Activated CD8-positive, alpha-beta T cell treated with anti-CD3 and anti-CD28 coated beads for 36 hours (primary cell): ENCODE measurements at regions of chr12 and their contacts with region 1.

Region 1: DNA sequence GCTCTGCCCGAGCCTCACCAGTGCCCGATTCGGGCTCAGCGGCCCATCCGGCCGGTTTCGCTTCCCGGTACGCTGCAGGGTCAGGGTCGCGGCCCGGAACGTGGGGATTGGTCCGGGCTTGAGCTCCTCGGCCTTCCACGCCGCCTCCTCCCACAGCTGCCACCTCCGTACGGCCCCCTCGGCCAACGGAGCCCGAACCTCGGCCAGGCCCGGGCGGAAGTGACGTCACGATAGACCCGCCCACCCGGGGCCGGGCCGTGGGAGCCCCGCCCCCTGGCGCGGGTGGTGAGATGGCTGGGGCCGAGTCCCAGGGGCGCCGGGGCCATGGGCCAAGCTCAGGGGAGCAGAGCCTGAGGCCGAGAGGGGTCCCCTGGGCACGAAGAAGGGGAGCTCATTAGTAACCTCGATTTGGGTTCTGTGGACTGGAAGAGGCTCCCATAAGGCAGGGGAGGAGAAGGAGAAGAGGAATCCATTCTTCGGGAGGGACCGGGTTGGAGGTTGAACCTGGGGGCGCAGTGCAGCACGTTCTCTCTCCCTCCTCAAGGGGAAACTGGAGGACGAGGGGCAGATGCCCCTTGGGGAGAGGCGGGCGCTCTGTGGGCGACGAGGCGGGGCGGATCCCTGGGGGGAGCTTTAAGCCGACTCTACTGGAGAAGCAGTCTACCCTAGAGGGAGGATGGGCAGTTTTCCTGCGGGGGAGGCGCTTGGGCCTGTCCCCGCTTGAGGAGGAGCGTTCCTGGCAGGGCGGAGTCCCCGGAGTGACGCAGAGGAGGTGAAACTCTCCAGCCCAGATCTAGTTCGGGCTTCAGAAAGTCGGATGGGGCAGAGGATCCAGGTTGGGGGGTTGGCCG is at the start of gene MLF2:
- DNase-seq: peak; percentile 99
- ATAC-seq: peak; percentile 95
- H3K4me3 Mint-ChIP-seq: peak within 1 kb of the TSS; percentile 91
- H3K27ac Mint-ChIP-seq: peak within 1 kb of the TSS; percentile 99
- H3K4me1 Mint-ChIP-seq: peaks cover 20% of the 10 kb centered on the region
- H3K27me3 Mint-ChIP-seq: no peaks in the 10 kb centered on the region
- CTCF ChIP-seq: no peak
- total RNA-seq, gene MLF2: 149 to 151 TPM

Region 2: DNA sequence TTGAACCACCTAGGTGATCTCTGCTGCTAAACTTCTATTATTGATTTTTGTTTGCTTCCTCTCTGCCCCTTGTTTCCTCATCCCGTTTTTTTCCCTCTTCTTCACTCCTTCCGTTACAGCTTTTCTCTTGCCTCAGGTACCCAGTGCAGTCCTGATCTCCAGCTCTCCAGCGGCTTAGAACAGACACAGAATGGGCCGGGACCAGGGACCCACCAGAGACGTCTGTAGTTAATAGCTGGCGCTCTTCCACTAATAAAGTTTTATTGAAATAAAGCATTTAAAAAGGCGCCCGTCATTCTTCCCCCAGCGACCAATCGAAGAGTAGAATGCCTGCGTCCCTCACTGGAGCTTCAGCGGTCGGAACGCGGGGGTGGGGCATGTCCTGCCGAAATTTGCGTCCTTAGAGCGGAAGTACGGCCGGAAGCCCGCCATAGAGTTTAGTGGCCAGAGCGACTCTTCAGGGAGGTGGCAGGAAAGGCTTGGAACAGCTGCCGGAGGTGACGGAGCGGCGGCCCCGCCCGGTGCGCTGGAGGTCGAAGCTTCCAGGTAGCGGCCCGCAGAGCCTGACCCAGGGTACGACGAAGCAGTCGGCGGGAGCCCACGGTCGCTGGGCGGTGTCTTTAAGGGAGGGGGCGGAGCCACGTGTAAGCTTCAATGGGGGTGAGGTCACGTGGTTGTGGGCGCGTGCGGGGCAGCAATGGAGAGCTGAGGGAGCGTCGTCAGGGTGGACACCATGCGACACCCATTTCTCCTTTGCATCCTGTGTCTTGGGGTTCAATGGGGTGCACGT is 29.3 kb before region 1 on chr12 and contains the start of gene COPS7A:
- CTCF ChIA-PET with region 1: interaction called, 27 read pairs
- POLR2A ChIA-PET with region 1: interaction called, 17 read pairs
- intact Hi-C with region 1: no loop called
- DNase-seq: peak; percentile 100
- ATAC-seq: peak; percentile 94
- H3K4me3 Mint-ChIP-seq: peak within 1 kb of the TSS; percentile 85
- H3K27ac Mint-ChIP-seq: peak within 1 kb of the TSS; percentile 97
- H3K4me1 Mint-ChIP-seq: peaks cover 24% of the 10 kb centered on the region
- H3K27me3 Mint-ChIP-seq: no peaks in the 10 kb centered on the region
- CTCF ChIP-seq: no peak
- total RNA-seq, gene COPS7A: 35.9 to 38.8 TPM

Region 3: DNA sequence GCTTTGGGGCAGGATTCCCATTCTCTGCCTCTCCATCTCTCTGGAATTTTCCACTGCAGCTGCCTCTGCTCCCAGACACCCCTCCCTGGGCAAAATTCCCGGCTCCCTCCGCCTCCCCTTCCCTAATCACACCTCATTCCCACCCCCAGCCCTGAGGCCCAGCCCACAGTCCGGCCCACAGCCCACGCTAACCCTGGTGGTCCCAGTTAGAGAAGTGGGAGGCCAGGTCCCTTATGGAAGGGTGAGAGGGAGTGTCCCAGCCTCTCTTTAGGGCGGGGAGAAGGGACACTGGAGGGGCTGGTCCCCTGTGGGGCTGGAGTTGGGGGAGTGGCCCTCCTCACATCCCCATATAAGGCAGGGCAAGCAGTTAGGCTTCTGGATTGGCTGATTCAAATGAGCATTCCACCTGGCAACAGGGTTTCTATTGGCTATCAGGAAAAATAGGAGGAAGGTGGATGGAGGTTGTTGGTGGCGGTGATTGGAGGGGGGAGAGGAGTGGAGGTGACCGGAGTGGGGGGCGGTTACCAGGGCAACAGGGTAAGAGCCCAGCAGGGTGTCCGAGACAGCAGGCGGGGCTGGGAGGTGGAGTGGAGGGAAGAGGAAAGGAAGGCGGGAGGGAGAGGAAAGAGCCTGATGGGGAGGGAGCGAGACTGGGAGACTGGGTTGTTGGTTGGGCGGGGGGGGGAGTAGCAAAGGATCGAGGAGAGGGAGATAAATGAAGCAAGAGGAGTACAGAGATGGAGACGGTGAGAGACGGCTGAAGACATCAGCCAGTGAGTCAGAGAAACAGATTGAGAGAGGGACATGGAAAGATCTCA is 11.1 kb after region 1 on chr12:
- CTCF ChIA-PET with region 1: interaction called, 77 read pairs
- POLR2A ChIA-PET with region 1: interaction called, 31 read pairs
- intact Hi-C with region 1: no loop called
- DNase-seq: peak; percentile 71
- ATAC-seq: peak; percentile 84
- H3K4me3 Mint-ChIP-seq: peak overlapping the region; percentile 42
- H3K27ac Mint-ChIP-seq: no peak overlapping the region
- H3K4me1 Mint-ChIP-seq: peaks cover 29% of the 10 kb centered on the region
- H3K27me3 Mint-ChIP-seq: peaks cover 32% of the 10 kb centered on the region
- CTCF ChIP-seq: no peak

Region 4: GRCh38 chr12:6778574-6779550 is 25.7 kb after region 1 on chr12:
- CTCF ChIA-PET with region 1: interaction called, 117 read pairs
- POLR2A ChIA-PET with region 1: interaction called, 31 read pairs
- intact Hi-C with region 1: no loop called
- DNase-seq: peak; percentile 96
- ATAC-seq: peak; percentile 54
- H3K4me3 Mint-ChIP-seq: peak overlapping the region; percentile 89
- H3K27ac Mint-ChIP-seq: peak overlapping the region; percentile 89
- H3K4me1 Mint-ChIP-seq: peaks cover 83% of the 10 kb centered on the region
- H3K27me3 Mint-ChIP-seq: no peaks in the 10 kb centered on the region
- CTCF ChIP-seq: peak; percentile 89

Region 5: DNA sequence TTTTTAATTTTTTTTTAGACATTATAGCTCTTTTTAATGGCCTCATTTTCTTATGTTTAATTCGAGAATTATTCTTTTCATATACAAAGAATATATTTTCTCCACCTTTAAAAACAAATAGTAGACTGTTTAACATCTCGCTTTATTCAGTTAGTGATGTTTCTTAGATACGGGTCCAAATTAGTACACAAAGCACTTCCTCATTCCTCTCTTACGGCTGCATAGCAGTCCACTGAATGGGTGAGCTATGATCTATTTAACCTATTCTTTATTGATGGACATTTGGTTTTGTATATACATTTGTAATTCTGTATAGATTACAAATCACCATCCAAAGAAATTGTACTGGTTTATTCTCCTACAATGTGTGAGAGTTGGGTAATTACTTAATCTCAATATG is 60.2 kb after region 1 on chr12:
- CTCF ChIA-PET with region 1: interaction called, 24 read pairs
- POLR2A ChIA-PET with region 1: interaction called, 3 read pairs
- intact Hi-C with region 1: no loop called
- DNase-seq: no peak
- ATAC-seq: no peak
- H3K4me3 Mint-ChIP-seq: no peak overlapping the region
- H3K27ac Mint-ChIP-seq: no peak overlapping the region
- H3K4me1 Mint-ChIP-seq: peaks cover 7% of the 10 kb centered on the region
- H3K27me3 Mint-ChIP-seq: peaks cover 2% of the 10 kb centered on the region
- CTCF ChIP-seq: no peak

Region 6: DNA sequence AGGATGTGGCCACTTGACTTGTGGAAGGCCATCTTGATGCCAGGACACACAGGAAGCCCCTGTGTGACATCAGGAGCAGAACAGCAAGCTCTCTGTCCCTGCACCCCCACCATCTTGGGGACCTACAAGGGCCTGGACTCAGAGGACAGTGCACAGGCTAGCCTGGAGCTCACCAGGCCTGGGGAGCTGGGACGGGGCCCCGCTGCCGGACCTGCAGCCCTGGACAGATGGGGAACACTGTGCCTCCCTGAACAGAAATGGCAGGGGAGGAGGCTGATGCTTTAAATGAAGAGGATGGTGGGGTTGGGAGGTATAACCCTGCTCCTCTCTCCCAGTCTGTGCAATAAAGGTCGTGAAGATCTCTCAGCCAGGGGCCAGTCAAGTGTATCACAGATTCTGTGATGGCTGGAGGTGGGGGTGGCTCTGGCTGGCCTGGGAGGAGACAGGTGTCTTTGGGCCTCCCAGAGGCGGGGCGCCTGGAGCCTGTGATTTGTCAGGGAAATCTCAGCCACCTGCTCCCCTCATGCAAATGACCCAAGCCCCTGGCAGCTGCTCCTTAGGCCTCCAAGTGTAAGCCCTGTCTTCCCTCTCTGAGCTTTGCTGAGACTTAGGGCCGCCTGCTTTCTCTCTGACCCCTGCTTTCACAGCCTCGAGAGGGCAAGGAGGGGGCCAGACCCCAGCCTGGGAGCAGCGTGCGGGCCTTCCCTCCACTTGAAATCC is 86.5 kb after region 1 on chr12:
- CTCF ChIA-PET with region 1: interaction called, 341 read pairs
- POLR2A ChIA-PET with region 1: interaction called, 4 read pairs
- intact Hi-C with region 1: no loop called
- DNase-seq: no peak
- ATAC-seq: no peak
- H3K4me3 Mint-ChIP-seq: no peak overlapping the region
- H3K27ac Mint-ChIP-seq: no peak overlapping the region
- H3K4me1 Mint-ChIP-seq: peaks cover 5% of the 10 kb centered on the region
- H3K27me3 Mint-ChIP-seq: no peaks in the 10 kb centered on the region
- CTCF ChIP-seq: no peak

Region 7: GRCh38 chr12:6867413-6868210 is 114.5 kb after region 1 on chr12 and contains the start of gene TPI1:
- CTCF ChIA-PET with region 1: interaction called, 24 read pairs
- POLR2A ChIA-PET with region 1: interaction called, 14 read pairs
- intact Hi-C with region 1: no loop called
- DNase-seq: peak; percentile 84
- ATAC-seq: peak; percentile 74
- H3K4me3 Mint-ChIP-seq: peak within 1 kb of the TSS; percentile 91
- H3K27ac Mint-ChIP-seq: peak within 1 kb of the TSS; percentile 97
- H3K4me1 Mint-ChIP-seq: peaks cover 55% of the 10 kb centered on the region
- H3K27me3 Mint-ChIP-seq: no peaks in the 10 kb centered on the region
- CTCF ChIP-seq: no peak
- total RNA-seq, gene TPI1: 1,714 to 1,776 TPM

Region 8: DNA sequence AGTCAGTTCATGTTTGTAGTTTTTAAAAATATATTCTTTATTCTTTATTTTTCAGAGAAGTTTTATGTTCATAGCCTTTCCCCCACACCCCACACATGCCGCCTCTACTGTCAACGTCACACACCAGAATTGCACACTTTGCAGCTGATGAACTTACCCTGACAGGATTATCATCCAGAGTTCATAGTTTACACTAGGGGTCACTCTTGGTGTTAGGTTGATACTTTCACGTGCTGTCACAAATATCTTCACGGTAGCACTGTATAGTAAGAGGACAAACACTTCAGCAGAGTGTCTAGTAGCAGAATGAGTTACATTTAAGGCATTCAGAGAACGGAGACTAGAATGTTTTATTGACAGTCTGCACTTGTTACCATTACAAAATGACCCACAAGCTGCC is 963.2 kb after region 1 on chr12:
- CTCF ChIA-PET with region 1: no interaction called
- POLR2A ChIA-PET with region 1: no interaction called
- intact Hi-C with region 1: no loop called
- DNase-seq: no peak
- ATAC-seq: no peak
- H3K4me3 Mint-ChIP-seq: no peak overlapping the region
- H3K27ac Mint-ChIP-seq: no peak overlapping the region
- H3K4me1 Mint-ChIP-seq: no peaks in the 10 kb centered on the region
- H3K27me3 Mint-ChIP-seq: peaks cover 4% of the 10 kb centered on the region
- CTCF ChIP-seq: no peak